Ascending aorta (tissue), 2 donors: ENCODE measurements at regions of chr3 and their contacts with region 1.

Region 1: DNA sequence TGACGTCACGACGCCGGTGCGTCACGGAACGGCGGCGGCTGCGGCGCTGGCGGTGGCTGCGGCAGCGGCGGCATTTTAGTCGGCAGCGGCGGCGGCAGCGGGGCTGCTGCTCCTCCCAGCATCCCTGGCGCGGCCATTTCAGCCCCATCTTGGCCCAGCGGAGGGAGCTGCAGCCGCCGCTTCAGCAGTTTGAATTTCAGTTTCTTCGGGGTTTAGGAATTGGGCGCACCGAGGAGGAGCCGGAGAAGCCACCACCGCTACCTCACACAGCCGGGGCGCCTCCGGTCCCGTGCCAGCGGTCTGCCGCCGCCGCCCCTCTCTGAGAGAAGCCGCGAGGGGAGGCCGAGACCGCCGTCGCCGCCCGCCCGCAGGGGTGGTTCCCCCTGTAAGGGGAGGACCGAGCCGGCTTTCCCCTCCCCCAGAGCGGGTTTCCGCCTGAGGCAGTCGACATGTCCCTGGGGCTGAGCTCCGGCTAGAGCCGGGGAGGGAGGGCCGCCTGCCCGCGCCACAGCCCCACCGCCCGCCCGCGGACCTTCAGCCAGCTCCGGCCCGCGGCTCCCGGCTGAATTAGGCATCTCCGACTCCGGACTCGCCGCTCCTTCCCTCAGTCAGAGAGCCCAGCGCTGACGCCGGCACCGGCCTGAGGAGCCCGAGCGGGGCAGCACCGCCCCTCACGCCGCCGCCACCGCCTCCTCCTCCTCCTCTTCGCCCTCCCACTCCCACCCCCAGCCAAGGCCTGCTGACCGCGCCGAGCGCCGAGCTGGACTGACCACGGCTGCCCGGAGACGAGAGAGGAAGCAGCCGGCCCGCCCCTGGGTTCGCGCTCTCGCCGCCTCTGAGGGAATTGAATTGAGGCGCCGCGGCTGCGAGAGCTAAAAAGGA is at the start of gene TSC22D2:
- DNase-seq: peak; percentile 78 to 97
- H3K4me3 ChIP-seq: peak within 1 kb of the TSS; percentile 59 to 81
- H3K27ac ChIP-seq: peak within 1 kb of the TSS; percentile 97 to 99
- H3K4me1 ChIP-seq: peaks cover 0 to 3% of the 10 kb centered on the region in 2 donors
- H3K27me3 ChIP-seq: no peaks in the 10 kb centered on the region
- CTCF ChIP-seq: peak; percentile 12 to 40 (median 18)
- total RNA-seq, gene TSC22D2: 17.9 TPM

Region 2: DNA sequence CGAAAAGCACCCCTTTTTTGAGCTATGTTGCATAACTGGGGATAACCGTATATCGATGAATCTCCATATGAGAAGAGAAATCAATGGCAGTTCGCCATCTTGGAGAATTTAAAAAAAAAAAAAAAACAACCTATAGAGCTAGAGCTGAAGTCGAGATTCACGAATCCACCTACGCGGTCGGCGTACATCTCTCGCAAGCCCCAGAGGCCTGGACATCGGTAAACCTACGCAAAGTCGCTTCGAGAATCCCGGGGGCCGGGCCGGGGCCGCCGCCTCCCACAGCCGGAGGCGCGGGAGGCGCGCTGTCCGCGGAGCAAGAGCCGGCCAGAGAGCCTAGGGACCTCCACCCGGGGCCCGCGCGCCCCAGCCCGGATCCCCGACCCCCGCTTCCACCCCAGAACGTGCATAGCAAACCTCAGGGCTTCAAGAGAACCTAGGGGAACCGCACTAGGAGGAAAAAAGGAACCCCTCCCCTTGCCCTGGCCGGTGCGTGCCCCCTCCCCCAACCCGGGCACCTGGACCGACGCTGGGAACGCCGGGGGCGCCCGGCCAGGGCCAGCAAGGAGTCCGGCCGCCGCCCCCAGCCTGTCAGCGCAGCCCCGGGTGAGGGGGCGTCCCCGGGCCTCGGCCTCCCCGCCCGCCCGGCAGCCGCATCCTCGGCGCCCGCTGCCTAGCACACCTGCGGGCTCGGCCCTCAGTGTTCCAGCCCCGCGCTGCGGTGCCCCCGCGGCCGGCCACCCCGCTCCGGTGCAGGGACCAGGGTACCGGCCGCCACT is 438.3 kb before region 1 on chr3:
- intact Hi-C with region 1: loop called (anchors 1 kb)
- DNase-seq: peak in 1 of 2 donors; percentile 87
- H3K4me3 ChIP-seq: peak overlapping the region; percentile 90 to 98
- H3K27ac ChIP-seq: peak overlapping the region; percentile 91 to 99
- H3K4me1 ChIP-seq: peaks cover 6 to 18% of the 10 kb centered on the region in 2 donors
- H3K27me3 ChIP-seq: no peaks in the 10 kb centered on the region
- CTCF ChIP-seq: no peak

Region 3: GRCh38 chr3:150232992-150233451 is 175.4 kb before region 1 on chr3:
- intact Hi-C with region 1: no loop called
- DNase-seq: no peak
- H3K4me3 ChIP-seq: no peak overlapping the region
- H3K27ac ChIP-seq: peak overlapping the region; percentile 10 to 62
- H3K4me1 ChIP-seq: peaks cover 2 to 25% of the 10 kb centered on the region in 2 donors
- H3K27me3 ChIP-seq: no peaks in the 10 kb centered on the region
- CTCF ChIP-seq: no peak

Region 4: DNA sequence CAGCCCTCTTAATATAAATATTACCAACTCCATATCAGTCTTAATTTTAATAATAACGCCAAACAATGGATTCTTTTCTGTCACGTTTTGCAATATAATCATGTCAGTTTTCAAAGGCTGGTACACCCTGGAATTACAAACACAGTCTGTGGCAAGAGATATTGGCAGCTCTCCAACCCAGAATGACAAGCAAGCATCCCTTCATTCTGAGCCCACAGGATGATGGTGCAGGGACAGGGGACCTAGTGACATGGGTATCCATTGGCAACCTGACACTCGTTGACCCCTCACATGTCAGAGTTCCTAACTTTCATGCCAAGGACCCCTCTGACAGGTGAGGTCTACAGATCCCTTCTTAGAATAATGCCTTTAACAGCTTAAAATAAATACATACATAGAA is 154.8 kb before region 1 on chr3:
- intact Hi-C with region 1: loop called (anchors 1 kb)
- DNase-seq: peak in 1 of 2 donors; percentile 69
- H3K4me3 ChIP-seq: no peak overlapping the region
- H3K27ac ChIP-seq: peak overlapping the region; percentile 62 to 92
- H3K4me1 ChIP-seq: peaks cover 16 to 40% of the 10 kb centered on the region in 2 donors
- H3K27me3 ChIP-seq: no peaks in the 10 kb centered on the region
- CTCF ChIP-seq: no peak

Region 5: GRCh38 chr3:150371741-150372254 is 36.7 kb before region 1 on chr3:
- intact Hi-C with region 1: loop called (anchors 1 kb)
- DNase-seq: peak in 1 of 2 donors; percentile 89
- H3K4me3 ChIP-seq: peak overlapping the region; percentile 34 to 49
- H3K27ac ChIP-seq: peak overlapping the region; percentile 72 to 83
- H3K4me1 ChIP-seq: peaks cover 0 to 11% of the 10 kb centered on the region in 2 donors
- H3K27me3 ChIP-seq: no peaks in the 10 kb centered on the region
- CTCF ChIP-seq: no peak

Region 6: DNA sequence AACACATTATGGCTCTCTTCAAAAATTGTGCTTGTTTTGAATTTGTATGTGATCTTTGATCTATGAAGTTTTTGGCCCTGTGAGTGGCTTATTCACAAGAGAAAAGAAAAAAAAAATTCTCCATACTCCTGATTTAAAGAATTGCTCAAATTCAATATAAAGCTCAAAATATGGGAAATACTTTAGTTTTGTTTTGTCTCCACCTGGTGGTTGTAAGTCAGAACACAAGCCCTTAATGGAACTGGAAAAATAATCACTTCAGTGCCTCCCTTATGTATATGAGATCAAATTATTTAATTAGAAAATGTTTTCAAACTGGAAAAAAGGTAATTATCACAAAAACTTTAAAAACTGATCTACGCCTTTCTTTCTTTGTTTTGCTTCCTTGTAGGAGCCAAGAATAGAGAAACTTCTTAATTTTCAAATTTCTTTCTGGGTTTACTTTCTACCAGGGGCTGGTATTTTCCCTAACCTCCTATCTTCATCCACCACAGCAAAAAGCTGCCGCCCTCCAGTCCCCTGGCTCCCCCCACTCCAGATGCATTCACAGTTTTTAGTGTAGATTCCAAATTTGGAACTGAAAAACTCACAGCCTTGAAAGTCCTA is 87.2 kb after region 1 on chr3:
- intact Hi-C with region 1: loop called (anchors 2 kb)
- DNase-seq: no peak
- H3K4me3 ChIP-seq: no peak overlapping the region
- H3K27ac ChIP-seq: no peak overlapping the region
- H3K4me1 ChIP-seq: no peaks in the 10 kb centered on the region
- H3K27me3 ChIP-seq: no peaks in the 10 kb centered on the region
- CTCF ChIP-seq: peak; percentile 67 to 78 (median 71)

Region 7: DNA sequence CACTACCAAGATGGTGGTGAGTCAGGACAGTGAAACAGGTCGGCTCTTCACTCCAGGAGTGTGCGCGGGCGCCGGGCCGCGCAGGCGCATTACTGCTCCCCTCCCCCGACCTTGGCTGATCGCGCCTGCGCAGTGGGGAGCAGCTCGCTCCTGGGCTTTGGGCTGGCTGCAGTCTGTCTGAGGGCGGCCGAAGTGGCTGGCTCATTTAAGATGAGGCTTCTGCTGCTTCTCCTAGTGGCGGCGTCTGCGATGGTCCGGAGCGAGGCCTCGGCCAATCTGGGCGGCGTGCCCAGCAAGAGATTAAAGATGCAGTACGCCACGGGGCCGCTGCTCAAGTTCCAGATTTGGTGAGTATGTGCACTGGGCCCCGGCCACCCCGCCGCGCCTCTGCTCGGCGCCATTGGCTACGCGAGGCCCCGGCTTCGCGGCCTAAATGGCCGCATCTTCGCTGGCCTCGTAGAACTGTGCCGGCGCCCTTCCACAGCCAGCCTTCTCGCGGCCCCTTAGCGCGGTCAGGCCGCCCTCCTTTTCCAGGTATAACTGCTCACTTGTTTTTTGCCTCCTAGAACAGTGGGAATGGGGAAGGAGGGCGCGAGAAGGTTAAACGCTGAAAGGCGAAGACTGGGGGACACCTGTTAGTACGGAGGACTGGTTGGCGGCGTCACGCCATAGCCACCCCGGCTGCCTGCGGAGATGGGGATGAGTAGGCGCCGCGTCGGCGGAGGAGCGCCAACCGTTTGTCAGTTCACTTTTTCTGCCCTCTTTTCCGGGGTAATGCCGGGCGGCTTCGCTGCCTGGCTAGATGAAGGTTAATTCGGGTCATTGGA is 194.9 kb after region 1 on chr3 and contains the start of gene SELENOT:
- intact Hi-C with region 1: loop called (anchors 5 kb)
- DNase-seq: peak; percentile 84 to 97
- H3K4me3 ChIP-seq: peak within 1 kb of the TSS; percentile 80 to 83
- H3K27ac ChIP-seq: peak within 1 kb of the TSS; percentile 95 to 96
- H3K4me1 ChIP-seq: peaks cover 8 to 21% of the 10 kb centered on the region in 2 donors
- H3K27me3 ChIP-seq: no peaks in the 10 kb centered on the region
- CTCF ChIP-seq: peak in 1 of 3 experiments; percentile 30
- total RNA-seq, gene SELENOT: 112 TPM